ENCODE measurements at regions of chr5 and their contacts with region 1.

Region 1: DNA sequence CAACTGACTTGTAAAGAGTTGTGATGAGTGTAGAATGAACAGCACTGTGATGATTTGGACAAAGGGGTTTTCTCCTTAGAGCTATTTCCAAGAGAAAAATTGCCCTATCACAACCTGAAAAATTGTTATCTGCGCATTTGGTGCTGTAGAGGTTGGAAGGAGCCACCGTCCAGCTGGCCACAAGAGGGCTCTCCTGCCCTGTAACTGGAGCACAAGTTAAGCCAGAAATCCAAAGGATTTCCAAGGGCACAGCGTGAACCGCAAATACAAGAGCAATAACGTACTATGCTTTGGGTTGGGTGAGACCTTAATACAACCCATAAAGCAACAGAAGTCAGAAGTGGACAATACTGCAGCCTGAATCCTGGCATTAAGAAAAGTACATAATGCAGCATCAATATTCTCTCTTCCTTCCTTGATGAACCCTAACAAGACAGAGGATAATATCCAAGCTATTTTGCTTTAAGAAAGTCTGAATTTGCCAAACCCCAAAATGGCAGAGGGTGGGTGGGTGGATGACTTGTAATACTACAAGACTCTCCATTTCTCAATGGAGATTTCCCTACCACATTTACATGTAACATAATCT is 56.8 kb upstream of the SMIM32 start:
- DNase-seq: peak; percentile 75
- H3K4me3 Mint-ChIP-seq: no peak overlapping the region
- H3K27ac Mint-ChIP-seq: no peak overlapping the region
- H3K4me1 Mint-ChIP-seq: peaks cover 11% of the 10 kb centered on the region
- H3K27me3 Mint-ChIP-seq: peaks cover 41% of the 10 kb centered on the region
- CTCF ChIP-seq: peak; percentile 99

Region 2: DNA sequence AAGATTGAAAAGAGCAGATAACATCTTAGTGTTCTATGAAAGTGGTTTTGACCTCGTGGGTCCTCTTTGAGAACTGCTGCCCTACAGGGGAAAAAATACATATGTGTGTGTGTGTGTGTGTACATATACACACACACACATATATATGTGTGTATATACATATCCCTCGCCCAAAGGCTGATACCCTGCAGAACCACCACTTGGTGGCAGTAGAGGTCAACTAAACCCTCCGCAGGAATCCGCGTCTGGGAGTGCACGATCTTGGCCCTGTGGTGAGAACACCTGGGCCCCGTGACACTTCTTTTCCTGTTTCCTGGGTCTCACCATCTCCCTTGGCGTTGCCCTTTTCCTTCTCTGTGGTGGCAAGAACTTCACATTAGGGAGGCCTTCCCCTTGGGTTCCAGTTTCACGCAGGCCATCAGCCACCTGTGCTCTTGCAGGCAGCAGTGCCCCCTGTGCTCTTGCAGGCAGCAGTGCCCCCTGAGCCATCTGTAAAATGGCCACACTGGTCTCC is 362.4 kb before region 1 on chr5:
- CTCF ChIA-PET with region 1: interaction called, 12 read pairs
- POLR2A ChIA-PET with region 1: no interaction called
- intact Hi-C with region 1: no loop called
- DNase-seq: peak; percentile 90
- H3K4me3 Mint-ChIP-seq: no peak overlapping the region
- H3K27ac Mint-ChIP-seq: no peak overlapping the region
- H3K4me1 Mint-ChIP-seq: no peaks in the 10 kb centered on the region
- H3K27me3 Mint-ChIP-seq: peaks cover 37% of the 10 kb centered on the region
- CTCF ChIP-seq: peak; percentile 96

Region 3: DNA sequence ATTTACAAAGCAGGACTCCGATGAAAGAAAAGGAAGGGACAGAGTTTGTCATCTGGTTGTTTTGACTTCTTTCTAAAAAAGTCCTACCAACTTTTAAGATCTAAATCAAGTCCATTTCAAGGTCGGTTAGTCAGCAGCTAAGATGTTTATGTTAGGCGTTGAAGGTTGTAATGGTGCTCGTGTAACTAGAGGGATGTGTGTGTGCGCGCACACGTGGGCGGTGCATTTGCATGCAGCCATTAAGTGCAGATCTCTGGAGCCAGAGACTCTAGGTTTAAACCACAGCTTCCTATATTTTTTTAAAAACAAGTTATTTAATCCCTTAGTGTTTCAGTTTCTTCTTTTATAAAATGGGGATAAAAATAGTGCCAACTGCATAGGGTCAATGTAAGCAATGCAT is 20.2 kb after region 1 on chr5:
- CTCF ChIA-PET with region 1: interaction called, 36 read pairs
- POLR2A ChIA-PET with region 1: no interaction called
- intact Hi-C with region 1: no loop called
- DNase-seq: no peak
- H3K4me3 Mint-ChIP-seq: no peak overlapping the region
- H3K27ac Mint-ChIP-seq: no peak overlapping the region
- H3K4me1 Mint-ChIP-seq: no peaks in the 10 kb centered on the region
- H3K27me3 Mint-ChIP-seq: peaks cover 59% of the 10 kb centered on the region
- CTCF ChIP-seq: no peak

Region 4: GRCh38 chr5:136364307-136364706 is 114.5 kb after region 1 on chr5:
- CTCF ChIA-PET with region 1: interaction called, 17 read pairs
- POLR2A ChIA-PET with region 1: no interaction called
- intact Hi-C with region 1: loop called (anchors 5 kb)
- DNase-seq: peak; percentile 27
- H3K4me3 Mint-ChIP-seq: no peak overlapping the region
- H3K27ac Mint-ChIP-seq: no peak overlapping the region
- H3K4me1 Mint-ChIP-seq: no peaks in the 10 kb centered on the region
- H3K27me3 Mint-ChIP-seq: peaks cover 31% of the 10 kb centered on the region
- CTCF ChIP-seq: peak; percentile 51

Region 5: DNA sequence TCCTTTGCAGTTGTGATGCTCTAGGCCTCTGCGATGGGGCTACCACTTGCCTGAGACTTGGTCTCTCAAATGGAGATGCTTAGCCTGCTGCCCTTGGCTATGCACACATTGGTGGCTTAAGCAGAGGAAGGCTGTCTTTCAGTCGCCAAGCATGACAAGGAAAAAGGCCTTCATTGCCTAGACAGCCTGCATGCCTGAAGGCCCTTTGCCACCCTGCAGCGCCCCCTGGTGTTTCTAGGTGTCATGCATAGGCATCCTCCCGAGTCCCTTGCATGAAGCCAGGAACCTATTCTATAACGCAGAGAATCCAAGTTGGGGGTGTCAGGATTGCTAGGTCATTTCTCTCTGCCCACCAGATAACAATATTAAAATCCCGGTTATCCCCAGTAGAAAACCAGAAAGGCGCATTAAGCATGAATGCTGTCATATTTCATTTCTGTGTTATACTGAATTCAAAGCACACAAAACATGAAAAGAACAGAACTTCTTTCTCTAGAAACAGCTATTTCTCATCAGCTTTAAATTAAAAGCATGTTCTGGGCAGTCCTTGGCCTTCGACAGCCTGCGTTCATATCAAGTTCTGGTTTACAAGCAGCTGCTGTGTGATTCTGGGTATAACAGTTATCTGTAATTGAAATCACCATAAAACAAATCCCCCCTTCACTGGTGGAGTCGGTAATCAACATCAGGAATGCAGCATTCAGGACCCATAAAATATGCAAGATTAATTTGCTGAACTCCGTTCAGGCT is 175.2 kb after region 1 on chr5:
- CTCF ChIA-PET with region 1: interaction called, 18 read pairs
- POLR2A ChIA-PET with region 1: no interaction called
- intact Hi-C with region 1: loop called (anchors 1 kb)
- DNase-seq: peak; percentile 90
- H3K4me3 Mint-ChIP-seq: no peak overlapping the region
- H3K27ac Mint-ChIP-seq: no peak overlapping the region
- H3K4me1 Mint-ChIP-seq: no peaks in the 10 kb centered on the region
- H3K27me3 Mint-ChIP-seq: peaks cover 75% of the 10 kb centered on the region
- CTCF ChIP-seq: peak; percentile 94

Region 6: DNA sequence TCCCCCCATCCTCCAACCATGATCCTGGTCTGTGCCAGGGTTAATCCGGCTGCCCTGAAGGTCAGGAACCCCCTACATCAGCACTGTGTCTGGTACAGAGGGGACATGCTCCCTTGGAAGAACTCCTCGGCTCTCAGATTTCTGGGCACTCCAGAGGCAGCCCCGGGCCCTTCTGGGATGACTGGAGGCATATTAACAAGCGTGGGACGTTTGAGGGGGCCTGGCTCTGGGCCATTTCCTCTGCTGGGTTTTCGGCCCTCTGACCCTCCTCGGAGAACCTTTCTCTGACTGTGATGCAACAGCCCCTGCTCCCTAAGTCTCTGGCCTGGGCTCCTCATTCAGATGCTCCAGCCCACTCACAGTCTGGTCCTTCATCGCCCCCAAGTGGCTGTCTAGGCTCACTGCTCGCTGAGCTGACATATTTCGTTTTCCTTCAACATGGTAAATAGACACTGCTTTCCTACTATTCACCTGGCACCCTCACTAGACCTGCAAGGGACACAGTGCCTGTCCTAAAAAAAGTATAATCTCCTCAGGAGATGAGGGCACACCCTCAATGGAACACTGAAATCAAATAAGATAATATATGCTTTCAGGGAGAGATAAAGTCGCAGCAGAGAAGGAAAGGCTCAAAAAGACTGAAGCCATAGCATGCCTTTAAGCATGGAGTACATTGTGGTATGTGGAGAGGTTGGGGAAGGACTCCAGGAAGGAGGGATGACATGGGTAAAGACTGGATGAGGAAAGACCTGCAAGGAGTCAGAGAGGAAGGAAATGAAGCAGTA is 520.3 kb after region 1 on chr5:
- CTCF ChIA-PET with region 1: interaction called, 136 read pairs
- POLR2A ChIA-PET with region 1: interaction called, 3 read pairs
- intact Hi-C with region 1: loop called (anchors 1 kb)
- DNase-seq: peak; percentile 89
- H3K4me3 Mint-ChIP-seq: no peak overlapping the region
- H3K27ac Mint-ChIP-seq: no peak overlapping the region
- H3K4me1 Mint-ChIP-seq: peaks cover 5% of the 10 kb centered on the region
- H3K27me3 Mint-ChIP-seq: peaks cover 49% of the 10 kb centered on the region
- CTCF ChIP-seq: peak; percentile 96

Region 7: GRCh38 chr5:137220523-137220927 is 970.8 kb after region 1 on chr5:
- CTCF ChIA-PET with region 1: interaction called, 11 read pairs
- POLR2A ChIA-PET with region 1: no interaction called
- intact Hi-C with region 1: loop called (anchors 5 kb)
- DNase-seq: peak; percentile 96
- H3K4me3 Mint-ChIP-seq: no peak overlapping the region
- H3K27ac Mint-ChIP-seq: no peak overlapping the region
- H3K4me1 Mint-ChIP-seq: peaks cover 30% of the 10 kb centered on the region
- H3K27me3 Mint-ChIP-seq: no peaks in the 10 kb centered on the region
- CTCF ChIP-seq: peak; percentile 76